ENCODE measurements at regions of chr17 and their contacts with region 1.

Region 1: DNA sequence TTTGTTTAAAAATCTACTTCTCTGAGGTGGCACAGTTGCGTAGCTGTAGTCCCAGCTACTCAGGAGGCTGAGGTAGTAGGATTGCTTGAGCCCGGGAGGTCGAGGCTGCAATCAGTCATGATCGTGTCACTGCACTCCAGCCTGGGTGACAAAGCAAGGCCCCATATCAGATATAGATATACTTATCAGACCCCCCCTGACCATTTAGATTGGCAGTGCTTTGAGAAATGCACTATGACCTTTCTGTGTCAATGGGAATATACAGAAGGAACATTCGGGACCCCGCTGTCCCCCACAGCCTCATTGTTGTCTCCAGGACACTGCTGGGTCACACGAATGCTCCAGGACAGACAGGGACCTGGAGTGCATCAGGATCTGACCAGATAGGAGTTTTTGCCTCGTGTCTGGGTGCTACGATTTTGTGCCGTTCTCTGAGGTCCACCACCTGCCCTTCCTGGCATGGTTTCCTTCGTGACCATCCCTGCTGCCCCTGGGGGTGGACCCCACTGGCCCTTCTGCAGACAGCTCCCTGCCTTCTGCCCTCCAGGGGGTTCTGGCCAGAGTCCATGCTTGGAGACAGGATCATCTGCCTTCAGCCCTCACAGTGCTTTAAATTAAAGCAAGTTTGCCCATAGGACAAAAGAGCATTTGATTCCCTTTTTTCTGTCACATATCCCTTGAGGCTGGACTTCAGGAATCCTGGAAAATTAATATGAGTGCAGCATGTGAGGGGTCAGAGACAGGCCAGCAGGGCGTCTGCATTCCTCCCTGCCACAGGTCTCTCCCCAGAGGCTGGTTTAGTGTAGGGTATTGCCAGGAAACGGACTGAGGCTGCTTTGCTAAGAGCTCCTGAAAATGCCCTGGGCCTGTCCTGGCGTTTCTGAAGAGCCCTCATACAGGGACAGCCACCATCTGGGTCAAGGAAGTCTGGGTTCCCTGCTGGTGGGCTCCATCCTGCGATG is 19.3 kb downstream of the PLD6 start:
- DNase-seq: no peak
- H3K4me3 ChIP-seq: no peak overlapping the region
- H3K4me3 Mint-ChIP-seq: peak overlapping the region in 2 of 7 donors; percentile 39 to 67
- H3K27ac ChIP-seq: no peak overlapping the region
- H3K27ac Mint-ChIP-seq: peak overlapping the region; percentile 56 to 97 (median 88)
- H3K4me1 ChIP-seq: peaks cover 56% of the 10 kb centered on the region
- H3K4me1 Mint-ChIP-seq: peaks cover 43 to 54% (median 46%) of the 10 kb centered on the region in 3 donors
- H3K27me3 ChIP-seq: no peaks in the 10 kb centered on the region
- H3K27me3 Mint-ChIP-seq: no peaks in the 10 kb centered on the region

Region 2: DNA sequence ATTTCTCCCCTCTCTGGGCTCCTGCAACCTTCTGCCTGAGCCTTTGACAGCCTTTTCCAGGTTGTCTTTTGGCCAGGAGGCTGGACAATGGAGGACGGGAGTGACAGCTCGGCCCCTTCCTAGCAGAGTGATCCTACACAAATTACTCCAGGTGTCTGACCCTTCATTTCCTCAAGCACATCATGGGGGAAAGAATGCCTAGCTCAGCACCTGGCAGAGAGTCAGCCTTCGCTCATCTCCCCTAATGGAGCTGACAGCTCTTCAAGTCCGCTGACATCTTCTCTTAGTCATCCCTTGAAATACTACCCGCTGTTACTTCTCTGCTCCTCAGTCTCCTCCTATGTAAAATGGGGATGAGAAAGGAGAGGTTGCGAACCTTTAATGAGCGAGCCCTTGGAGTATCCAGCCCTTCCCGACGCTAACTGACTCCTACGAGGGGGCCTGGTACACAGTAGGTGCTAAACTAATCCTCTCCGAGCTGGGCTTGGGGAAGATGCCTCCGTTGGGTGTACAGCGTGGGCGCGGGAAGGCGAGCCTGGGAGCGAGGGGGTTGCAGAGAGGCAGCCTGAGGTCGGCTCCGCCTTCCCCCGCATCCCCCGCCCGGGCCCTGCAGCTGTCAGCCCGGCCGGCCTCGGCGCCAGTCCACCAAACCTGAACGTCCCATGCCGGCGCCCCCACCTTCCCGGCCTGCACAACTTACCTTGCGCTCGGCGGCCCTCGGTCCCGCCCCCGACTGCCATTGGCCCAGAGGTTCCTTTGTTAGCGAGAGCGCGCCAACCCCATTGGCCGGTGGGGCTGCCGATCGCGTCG is 145.1 kb before region 1 on chr17:
- CTCF ChIA-PET with region 1: no interaction called
- POLR2A ChIA-PET with region 1: no interaction called
- DNase-seq: peak; percentile 93 to 98 (median 95)
- H3K4me3 ChIP-seq: peak overlapping the region; percentile 55
- H3K4me3 Mint-ChIP-seq: peak overlapping the region; percentile 56 to 85 (median 73)
- H3K27ac ChIP-seq: no peak overlapping the region
- H3K27ac Mint-ChIP-seq: peak overlapping the region in 5 of 8 donors; percentile 40 to 78 (median 69)
- H3K4me1 ChIP-seq: peaks cover 46% of the 10 kb centered on the region
- H3K4me1 Mint-ChIP-seq: peaks cover 39 to 45% (median 43%) of the 10 kb centered on the region in 3 donors
- H3K27me3 ChIP-seq: no peaks in the 10 kb centered on the region
- H3K27me3 Mint-ChIP-seq: peaks cover 0 to 1% of the 10 kb centered on the region in 2 donors

Region 3: GRCh38 chr17:17200831-17201230 is 14.0 kb after region 1 on chr17:
- CTCF ChIA-PET with region 1: interaction called, 12 read pairs
- POLR2A ChIA-PET with region 1: no interaction called
- DNase-seq: no peak
- H3K4me3 ChIP-seq: no peak overlapping the region
- H3K4me3 Mint-ChIP-seq: peak overlapping the region in 1 of 7 donors; percentile 21
- H3K27ac ChIP-seq: no peak overlapping the region
- H3K27ac Mint-ChIP-seq: no peak overlapping the region
- H3K4me1 ChIP-seq: peaks cover 28% of the 10 kb centered on the region
- H3K4me1 Mint-ChIP-seq: peaks cover 21 to 37% (median 34%) of the 10 kb centered on the region in 3 donors
- H3K27me3 ChIP-seq: no peaks in the 10 kb centered on the region
- H3K27me3 Mint-ChIP-seq: peaks cover 0 to 3% of the 10 kb centered on the region in 2 donors